Left cardiac atrium (tissue), 4 donors: ENCODE measurements at regions of chr2 and their contacts with region 1.

Region 1: GRCh38 chr2:27071277-27071989 is at the start of gene OST4:
- DNase-seq: peak; percentile 96
- ATAC-seq: peak; percentile 96 to 97
- total RNA-seq, gene OST4: 364 to 404 TPM

Region 2: DNA sequence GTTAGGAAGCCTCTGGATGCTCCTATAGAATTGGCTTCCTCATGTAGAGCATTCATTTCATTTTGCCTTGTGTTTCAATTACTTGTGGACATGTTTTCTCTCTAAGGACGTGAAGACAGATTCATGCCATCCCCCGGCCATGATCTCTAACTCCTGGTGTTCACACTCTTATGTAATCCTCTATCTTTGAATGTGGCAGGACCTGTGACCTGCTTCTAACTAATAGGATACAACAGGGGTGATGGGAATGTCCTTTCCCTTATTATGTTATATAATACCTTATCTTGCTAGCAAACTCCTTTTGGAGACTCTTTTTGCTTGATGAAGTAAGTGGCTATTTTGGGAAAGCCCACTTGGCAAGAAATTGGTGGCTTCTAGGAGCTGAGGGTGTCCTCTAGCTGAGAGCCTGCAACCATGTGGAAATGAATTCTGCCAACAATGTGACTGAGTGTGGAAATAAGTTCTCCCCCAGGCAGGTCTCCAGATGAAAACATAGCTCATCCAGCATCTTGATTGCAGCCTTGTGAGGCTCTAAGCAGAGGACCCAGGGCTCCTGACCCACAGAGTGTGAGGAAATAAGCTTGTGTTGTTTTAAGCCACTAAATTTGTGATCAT is 209.7 kb before region 1 on chr2:
- intact Hi-C with region 1: no loop called
- DNase-seq: no peak
- ATAC-seq: peak; percentile 55 to 94

Region 3: GRCh38 chr2:27050281-27050995 is 21.0 kb before region 1 on chr2:
- intact Hi-C with region 1: loop called in 1 of 2 experiments (anchors 2 kb)
- DNase-seq: peak; percentile 84
- ATAC-seq: peak; percentile 84 to 85

Region 4: GRCh38 chr2:27537287-27537686 is 465.9 kb after region 1 on chr2:
- intact Hi-C with region 1: no loop called
- DNase-seq: no peak
- ATAC-seq: no peak